H1 (cell line): ENCODE measurements at regions of chr11 and their contacts with region 1.

Region 1: GRCh38 chr11:64240394-64241174 is at the start of gene FKBP2:
- DNase-seq: peak; percentile 88 to 97
- H3K4me3 ChIP-seq: peak within 1 kb of the TSS; percentile 67 to 82 (median 78)
- H3K27ac ChIP-seq: peak within 1 kb of the TSS; percentile 87
- H3K4me1 ChIP-seq: peaks cover 0 to 16% (median 12%) of the 10 kb centered on the region in 4 experiments; a peak in 6 of 7 replicates
- H3K27me3 ChIP-seq: no peaks in the 10 kb centered on the region; a peak in 2 of 7 replicates
- CTCF ChIP-seq: no peak; a peak in 1 of 4 replicates
- EP300 ChIP-seq: no peak
- POLR2A ChIP-seq: peak in 1 of 2 experiments; percentile 81; a peak in 2 of 3 replicates
- RAD21 ChIP-seq: no peak
- total RNA-seq, gene FKBP2: 41.7 and 43.2 TPM in 2 replicates

Region 2: DNA sequence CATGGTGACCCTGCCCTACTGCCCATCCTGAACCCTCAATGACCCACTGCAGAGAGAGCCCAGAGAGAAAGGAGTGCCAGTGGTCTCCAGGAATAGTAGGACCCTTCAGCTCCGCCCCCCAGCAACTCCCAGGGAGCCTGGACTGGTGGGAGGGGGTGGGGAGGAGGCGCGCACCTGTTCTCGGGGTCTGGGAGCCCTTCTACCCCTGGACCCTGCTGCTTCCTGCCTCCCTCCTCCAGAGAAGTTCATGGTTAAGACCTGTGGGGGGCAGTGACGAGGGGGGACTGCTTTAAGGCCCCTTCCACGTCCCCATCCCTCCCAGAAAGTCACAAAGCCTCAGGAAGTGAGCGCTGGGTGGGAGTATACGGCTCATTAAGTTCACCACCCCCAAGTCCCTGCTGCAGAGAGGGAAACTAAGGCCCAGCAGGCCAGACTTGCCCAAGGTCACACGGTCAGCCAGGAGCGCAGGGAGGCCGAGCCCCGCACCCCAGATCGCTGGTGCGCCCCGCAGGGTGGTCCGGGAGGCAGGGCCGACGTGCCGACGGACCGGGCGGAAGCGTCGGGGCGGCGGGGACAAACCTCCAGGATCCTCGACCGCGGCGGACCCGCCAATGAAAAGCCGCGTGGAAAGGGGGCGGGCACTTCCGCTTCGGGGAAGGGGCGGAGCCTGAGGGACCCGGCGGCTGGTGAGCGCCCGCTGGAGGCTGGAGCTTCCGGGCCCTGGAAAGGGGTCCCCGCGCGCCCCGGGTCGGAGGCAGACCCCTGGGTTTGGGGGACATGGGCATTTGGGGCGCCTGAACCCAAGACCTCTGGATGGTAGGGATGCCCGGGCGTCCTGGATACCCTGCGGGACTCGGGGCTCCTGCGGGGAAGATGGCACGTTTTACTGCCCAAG is 14.7 kb before region 1 on chr11 and contains the starts of genes NUDT22 and TRPT1:
- CTCF ChIA-PET with region 1: interaction called, 17 read pairs
- POLR2A ChIA-PET with region 1: interaction called, 190 read pairs
- DNase-seq: peak in 1 of 2 experiments; percentile 97
- H3K4me3 ChIP-seq: peak within 1 kb of the TSS; percentile 63 to 90 (median 84)
- H3K27ac ChIP-seq: peak within 1 kb of the TSS; percentile 11; the same call in 1 of the 2 replicates
- H3K4me1 ChIP-seq: peaks cover 0 to 23% (median 14%) of the 10 kb centered on the region in 4 experiments; a peak in 6 of 7 replicates
- H3K27me3 ChIP-seq: no peaks in the 10 kb centered on the region
- CTCF ChIP-seq: peak in 1 of 3 experiments; percentile 48; a peak in 1 of 4 replicates
- EP300 ChIP-seq: no peak
- POLR2A ChIP-seq: peak in 1 of 2 experiments; percentile 44; a peak in 2 of 3 replicates
- RAD21 ChIP-seq: no peak; a peak in 2 of 4 replicates
- total RNA-seq, gene NUDT22: 43.4 and 51.5 TPM in 2 replicates
- total RNA-seq, gene TRPT1: 34.5 and 39.7 TPM in 2 replicates

Region 3: DNA sequence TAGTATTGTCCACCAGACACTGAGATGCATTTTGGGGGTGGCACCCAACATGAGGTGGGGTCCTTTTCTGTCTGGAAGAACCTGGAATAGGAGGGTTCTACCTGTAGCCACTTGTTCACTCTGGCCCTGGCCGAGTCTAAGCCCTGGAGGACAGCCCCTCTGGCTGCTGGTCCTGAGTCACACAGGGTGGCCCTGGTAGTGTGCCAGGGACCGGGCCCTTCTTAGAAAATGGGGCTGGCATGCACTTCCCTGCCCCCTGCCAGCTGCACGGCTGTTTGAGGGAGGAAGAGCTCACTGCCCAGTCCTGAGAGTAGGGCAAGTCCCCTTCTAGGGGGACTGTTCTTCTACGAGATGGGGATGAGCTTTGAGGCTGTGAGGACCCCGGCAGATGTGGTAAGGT is 12.9 kb after region 1 on chr11:
- CTCF ChIA-PET with region 1: interaction called, 26 read pairs
- POLR2A ChIA-PET with region 1: interaction called, 190 read pairs
- DNase-seq: no peak
- H3K4me3 ChIP-seq: no peak overlapping the region; a peak in 1 of 8 replicates
- H3K27ac ChIP-seq: no peak overlapping the region
- H3K4me1 ChIP-seq: peaks cover 0 to 31% (median 26%) of the 10 kb centered on the region in 4 experiments; a peak in 6 of 7 replicates
- H3K27me3 ChIP-seq: no peaks in the 10 kb centered on the region
- CTCF ChIP-seq: no peak
- EP300 ChIP-seq: no peak
- POLR2A ChIP-seq: no peak
- RAD21 ChIP-seq: no peak

Region 4: GRCh38 chr11:64284048-64284961 is 43.7 kb after region 1 on chr11 and contains the start of gene BAD:
- CTCF ChIA-PET with region 1: interaction called, 3 read pairs
- POLR2A ChIA-PET with region 1: interaction called, 35 read pairs
- DNase-seq: peak in 1 of 2 experiments; percentile 96
- H3K4me3 ChIP-seq: peak within 1 kb of the TSS; percentile 49 to 70 (median 69)
- H3K27ac ChIP-seq: peak within 1 kb of the TSS; percentile 68; the same call in 1 of the 2 replicates
- H3K4me1 ChIP-seq: peaks cover 0 to 8% (median 4%) of the 10 kb centered on the region in 4 experiments; a peak in 4 of 7 replicates
- H3K27me3 ChIP-seq: peaks cover 0 to 7% (median 3%) of the 10 kb centered on the region in 4 experiments; a peak in 3 of 7 replicates
- CTCF ChIP-seq: no peak
- EP300 ChIP-seq: no peak
- POLR2A ChIP-seq: peak in 1 of 2 experiments; percentile 25; a peak in 1 of 3 replicates
- RAD21 ChIP-seq: no peak
- total RNA-seq, gene BAD: 23.1 and 25.3 TPM in 2 replicates